ENCODE measurements at regions of chr7 and their contacts with region 1.

Region 1: DNA sequence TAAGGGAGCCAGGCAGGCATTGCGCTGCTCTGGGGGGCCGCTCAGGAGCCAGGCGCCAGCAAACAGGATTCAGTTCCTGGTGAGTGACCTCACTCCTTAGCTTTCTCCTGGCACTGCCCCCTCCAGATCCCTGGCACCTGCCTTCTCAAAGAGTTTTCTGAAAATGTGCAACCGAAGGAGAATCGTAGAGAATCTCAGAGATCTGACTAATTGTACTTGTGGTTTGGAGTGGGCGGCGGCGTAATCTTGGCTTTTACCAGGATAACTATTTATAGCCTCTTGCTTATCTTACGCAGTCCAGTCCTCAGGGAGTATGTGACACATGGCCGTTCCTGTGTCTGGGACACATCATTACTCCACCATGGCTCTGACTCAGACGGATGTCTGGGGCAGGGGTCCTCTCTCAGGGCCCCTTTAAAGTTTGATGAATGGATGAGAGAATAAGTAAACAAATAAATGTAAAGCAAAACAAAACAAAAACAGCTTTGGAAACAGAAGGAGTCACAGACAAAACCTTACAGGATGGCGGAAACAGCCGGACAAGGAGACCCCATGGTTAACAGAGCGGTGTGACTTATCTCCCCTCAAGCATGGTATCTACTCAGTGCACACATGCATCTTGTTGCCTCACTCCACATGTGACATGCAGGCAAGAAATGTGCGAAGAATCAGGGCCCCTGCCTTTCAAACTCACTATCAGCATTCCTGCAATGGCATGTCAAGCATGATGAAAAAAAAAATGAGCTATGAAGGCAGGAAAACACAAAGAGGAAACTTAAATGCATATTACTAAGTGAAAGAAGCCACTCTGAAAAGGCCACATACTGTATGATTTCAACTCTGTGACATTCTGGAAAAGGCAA is 99.7 kb downstream of the TNS3 start:
- DNase-seq: no peak
- H3K4me3 ChIP-seq: no peak overlapping the region
- H3K27ac ChIP-seq: no peak overlapping the region
- H3K4me1 ChIP-seq: peaks cover 33% of the 10 kb centered on the region
- CTCF ChIP-seq: no peak

Region 2: GRCh38 chr7:47627580-47628283 is 145.5 kb after region 1 on chr7:
- CTCF ChIA-PET with region 1: no interaction called
- POLR2A ChIA-PET with region 1: no interaction called
- intact Hi-C with region 1: no loop called
- DNase-seq: peak; percentile 77
- H3K4me3 ChIP-seq: peak overlapping the region; percentile 21
- H3K27ac ChIP-seq: peak overlapping the region; percentile 80
- H3K4me1 ChIP-seq: peaks cover 64% of the 10 kb centered on the region
- CTCF ChIP-seq: no peak

Region 3: DNA sequence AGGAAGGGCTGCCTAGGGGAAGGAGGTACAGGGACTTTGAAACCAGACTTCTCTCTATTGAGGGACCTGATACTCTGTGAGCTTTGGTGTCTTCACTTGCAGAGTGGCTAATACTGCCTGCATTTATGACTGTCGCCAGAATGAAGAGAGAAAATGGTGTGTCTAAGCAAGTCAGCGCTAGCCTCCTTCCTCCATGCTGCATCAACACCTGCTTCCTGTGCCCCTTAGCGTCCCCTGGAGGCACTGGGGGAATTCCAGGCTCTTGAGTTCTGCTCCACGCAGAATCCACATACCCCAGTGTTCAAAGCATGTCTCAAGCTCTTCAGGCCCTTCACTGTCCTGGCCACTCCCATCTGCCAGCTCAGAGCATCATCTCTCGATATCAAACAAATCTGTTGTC is 325.5 kb after region 1 on chr7:
- CTCF ChIA-PET with region 1: interaction called, 13 read pairs
- POLR2A ChIA-PET with region 1: no interaction called
- intact Hi-C with region 1: no loop called
- DNase-seq: peak; percentile 57
- H3K4me3 ChIP-seq: no peak overlapping the region
- H3K27ac ChIP-seq: no peak overlapping the region
- H3K4me1 ChIP-seq: peaks cover 11% of the 10 kb centered on the region
- CTCF ChIP-seq: peak; percentile 67

Measured in OCI-LY7 (cell line).